ENCODE measurements at regions of chr1 and their contacts with region 1.

Region 1: GRCh38 chr1:109397538-109398342 is at the start of gene SORT1:
- DNase-seq: peak; percentile 75 to 91 (median 88)
- H3K4me3 ChIP-seq: peak within 1 kb of the TSS; percentile 55 to 76 (median 68)
- H3K27ac ChIP-seq: no peak within 1 kb of the TSS
- H3K4me1 ChIP-seq: peaks cover 16 to 47% (median 21%) of the 10 kb centered on the region in 4 experiments
- H3K27me3 ChIP-seq: peaks cover 0 to 23% (median 6%) of the 10 kb centered on the region in 5 experiments

Region 2: GRCh38 chr1:109239580-109240095 is 158.1 kb before region 1 on chr1:
- CTCF ChIA-PET with region 1: interaction called, 11 read pairs
- POLR2A ChIA-PET with region 1: no interaction called
- DNase-seq: peak; percentile 27 to 47 (median 43)
- H3K4me3 ChIP-seq: no peak overlapping the region
- H3K27ac ChIP-seq: no peak overlapping the region
- H3K4me1 ChIP-seq: no peaks in the 10 kb centered on the region
- H3K27me3 ChIP-seq: peaks cover 0 to 46% (median 22%) of the 10 kb centered on the region in 5 experiments

Region 3: DNA sequence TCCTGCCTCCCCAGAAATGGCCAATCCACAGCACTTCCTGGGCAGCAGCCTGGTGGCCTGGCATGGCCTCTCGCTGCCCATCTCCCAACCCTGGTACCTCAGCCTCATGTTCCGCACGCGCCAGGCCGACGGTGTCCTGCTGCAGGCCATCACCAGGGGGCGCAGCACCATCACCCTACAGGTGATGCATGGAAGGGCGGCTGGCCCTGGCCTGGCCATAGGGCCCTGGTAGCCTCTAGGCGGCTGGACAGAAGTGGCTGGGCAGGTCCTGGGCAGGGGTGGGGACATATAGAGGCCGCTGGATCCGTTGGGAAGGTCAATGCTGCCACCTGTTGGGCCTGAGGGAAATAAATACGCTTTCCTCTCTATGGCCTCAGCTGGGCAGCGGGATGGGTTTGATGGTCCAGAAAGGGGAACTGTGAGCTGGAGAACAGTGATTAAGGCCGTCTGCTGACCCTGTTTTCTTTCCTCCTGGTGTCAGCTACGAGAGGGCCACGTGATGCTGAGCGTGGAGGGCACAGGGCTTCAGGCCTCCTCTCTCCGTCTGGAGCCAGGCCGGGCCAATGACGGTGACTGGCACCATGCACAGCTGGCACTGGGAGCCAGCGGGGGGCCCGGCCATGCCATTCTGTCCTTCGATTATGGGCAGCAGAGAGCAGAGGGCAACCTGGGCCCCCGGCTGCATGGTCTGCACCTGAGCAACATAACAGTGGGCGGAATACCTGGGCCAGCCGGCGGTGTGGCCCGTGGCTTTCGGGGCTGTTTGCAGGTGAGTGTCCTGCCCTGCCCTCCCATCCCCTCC is 133.9 kb before region 1 on chr1:
- CTCF ChIA-PET with region 1: interaction called, 95 read pairs
- POLR2A ChIA-PET with region 1: no interaction called
- DNase-seq: peak; percentile 68 to 83 (median 79)
- H3K4me3 ChIP-seq: no peak overlapping the region
- H3K27ac ChIP-seq: no peak overlapping the region
- H3K4me1 ChIP-seq: no peaks in the 10 kb centered on the region
- H3K27me3 ChIP-seq: peaks cover 0 to 25% (median 2%) of the 10 kb centered on the region in 5 experiments

Region 4: GRCh38 chr1:109277434-109278204 is 120.1 kb before region 1 on chr1:
- CTCF ChIA-PET with region 1: interaction called, 181 read pairs
- POLR2A ChIA-PET with region 1: no interaction called
- DNase-seq: peak; percentile 62 to 70 (median 63)
- H3K4me3 ChIP-seq: no peak overlapping the region
- H3K27ac ChIP-seq: no peak overlapping the region
- H3K4me1 ChIP-seq: peaks cover 6 to 61% (median 22%) of the 10 kb centered on the region in 4 experiments
- H3K27me3 ChIP-seq: peaks cover 0 to 5% (median 0%) of the 10 kb centered on the region in 5 experiments

Region 5: DNA sequence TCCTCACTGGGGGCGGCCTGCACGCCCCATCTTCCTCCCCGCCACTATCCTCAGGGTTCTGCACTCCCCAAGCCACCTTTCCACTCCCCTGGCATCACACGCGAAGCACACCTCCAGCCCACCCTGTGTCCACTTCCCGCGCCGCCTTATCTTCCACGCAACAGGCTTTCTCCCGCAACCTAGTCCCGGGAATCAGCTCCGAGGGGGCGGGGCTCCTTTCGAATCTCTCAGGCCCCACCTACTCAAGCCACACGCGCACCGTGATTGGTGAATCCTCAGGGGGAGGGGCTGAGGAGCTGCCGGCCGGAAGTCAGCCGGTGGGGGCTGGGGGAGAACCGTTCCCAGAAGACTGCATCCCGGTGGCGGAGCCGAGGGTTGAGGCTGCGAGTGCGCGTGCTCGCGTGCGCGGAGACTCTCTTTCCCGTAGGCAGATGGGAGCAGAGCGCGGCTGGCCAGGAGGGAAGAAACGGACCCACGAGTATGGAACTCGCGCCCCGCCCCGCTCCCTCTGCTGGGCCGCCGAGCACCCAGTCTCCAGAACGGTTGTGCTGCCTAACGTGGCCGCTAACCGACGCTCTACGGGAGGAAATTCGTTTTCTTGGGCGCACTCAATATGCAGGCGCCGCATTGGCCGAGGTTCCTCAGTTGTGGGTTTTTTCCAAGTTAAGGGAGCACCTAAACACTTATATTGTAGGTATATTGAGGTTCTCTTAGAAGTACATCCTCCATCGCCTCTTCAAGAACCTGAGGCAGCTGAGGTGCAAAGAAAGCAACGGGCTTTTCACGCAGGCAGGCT is 114.6 kb before region 1 on chr1 and contains the start of gene PSRC1:
- CTCF ChIA-PET with region 1: interaction called, 181 read pairs
- POLR2A ChIA-PET with region 1: no interaction called
- DNase-seq: peak; percentile 84 to 87 (median 85)
- H3K4me3 ChIP-seq: peak within 1 kb of the TSS; percentile 76 to 94 (median 89)
- H3K27ac ChIP-seq: peak within 1 kb of the TSS; percentile 13 to 73
- H3K4me1 ChIP-seq: peaks cover 6 to 39% (median 23%) of the 10 kb centered on the region in 4 experiments
- H3K27me3 ChIP-seq: no peaks in the 10 kb centered on the region

Region 6: GRCh38 chr1:109383080-109383769 is 14.5 kb before region 1 on chr1:
- CTCF ChIA-PET with region 1: interaction called, 10 read pairs
- POLR2A ChIA-PET with region 1: interaction called, 3 read pairs
- DNase-seq: no peak
- H3K4me3 ChIP-seq: no peak overlapping the region
- H3K27ac ChIP-seq: no peak overlapping the region
- H3K4me1 ChIP-seq: peaks cover 0 to 3% (median 0%) of the 10 kb centered on the region in 4 experiments
- H3K27me3 ChIP-seq: no peaks in the 10 kb centered on the region

Region 7: DNA sequence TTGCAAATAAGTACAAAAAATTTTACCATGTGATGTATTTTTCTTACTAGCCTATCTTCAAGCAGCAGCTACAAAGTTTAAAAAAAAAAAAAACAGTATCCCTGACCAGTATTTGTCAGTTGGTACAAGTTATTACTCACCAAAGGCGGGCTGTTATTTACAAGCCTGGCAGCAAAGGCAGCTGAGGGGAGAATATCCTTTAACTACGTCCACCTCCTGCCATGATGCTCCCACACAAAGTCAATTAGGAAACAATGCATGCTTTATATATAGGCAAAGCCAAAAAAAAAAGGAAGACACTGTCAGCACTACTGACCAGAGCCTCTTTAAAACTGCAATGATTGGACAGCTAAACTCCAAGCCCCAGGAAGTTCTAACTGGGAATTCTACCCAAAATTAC is 14.8 kb after region 1 on chr1:
- CTCF ChIA-PET with region 1: interaction called, 58 read pairs
- POLR2A ChIA-PET with region 1: no interaction called
- DNase-seq: no peak
- H3K4me3 ChIP-seq: no peak overlapping the region
- H3K27ac ChIP-seq: no peak overlapping the region
- H3K4me1 ChIP-seq: no peaks in the 10 kb centered on the region
- H3K27me3 ChIP-seq: no peaks in the 10 kb centered on the region

Region 8: GRCh38 chr1:109548321-109549267 is 150.9 kb after region 1 on chr1 and contains the start of gene GNAI3:
- CTCF ChIA-PET with region 1: no interaction called
- POLR2A ChIA-PET with region 1: no interaction called
- DNase-seq: peak; percentile 98 to 99 (median 99)
- H3K4me3 ChIP-seq: peak within 1 kb of the TSS; percentile 96 to 99 (median 98)
- H3K27ac ChIP-seq: peak within 1 kb of the TSS; percentile 95 to 98
- H3K4me1 ChIP-seq: peaks cover 21 to 35% (median 32%) of the 10 kb centered on the region in 4 experiments
- H3K27me3 ChIP-seq: no peaks in the 10 kb centered on the region

Region 9: GRCh38 chr1:109740661-109741378 is 343.1 kb after region 1 on chr1 and contains the start of gene GSTM3:
- CTCF ChIA-PET with region 1: no interaction called
- POLR2A ChIA-PET with region 1: no interaction called
- DNase-seq: peak in 2 of 3 donors; percentile 11 to 13
- H3K4me3 ChIP-seq: peak within 1 kb of the TSS; percentile 40 to 78 (median 69)
- H3K27ac ChIP-seq: no peak within 1 kb of the TSS
- H3K4me1 ChIP-seq: peaks cover 0 to 15% (median 14%) of the 10 kb centered on the region in 4 experiments
- H3K27me3 ChIP-seq: peaks cover 0 to 19% (median 2%) of the 10 kb centered on the region in 5 experiments

Measured in common myeloid progenitor, CD34-positive (primary cell).